ENCODE measurements at regions of chr14 and their contacts with region 1.

Region 1: DNA sequence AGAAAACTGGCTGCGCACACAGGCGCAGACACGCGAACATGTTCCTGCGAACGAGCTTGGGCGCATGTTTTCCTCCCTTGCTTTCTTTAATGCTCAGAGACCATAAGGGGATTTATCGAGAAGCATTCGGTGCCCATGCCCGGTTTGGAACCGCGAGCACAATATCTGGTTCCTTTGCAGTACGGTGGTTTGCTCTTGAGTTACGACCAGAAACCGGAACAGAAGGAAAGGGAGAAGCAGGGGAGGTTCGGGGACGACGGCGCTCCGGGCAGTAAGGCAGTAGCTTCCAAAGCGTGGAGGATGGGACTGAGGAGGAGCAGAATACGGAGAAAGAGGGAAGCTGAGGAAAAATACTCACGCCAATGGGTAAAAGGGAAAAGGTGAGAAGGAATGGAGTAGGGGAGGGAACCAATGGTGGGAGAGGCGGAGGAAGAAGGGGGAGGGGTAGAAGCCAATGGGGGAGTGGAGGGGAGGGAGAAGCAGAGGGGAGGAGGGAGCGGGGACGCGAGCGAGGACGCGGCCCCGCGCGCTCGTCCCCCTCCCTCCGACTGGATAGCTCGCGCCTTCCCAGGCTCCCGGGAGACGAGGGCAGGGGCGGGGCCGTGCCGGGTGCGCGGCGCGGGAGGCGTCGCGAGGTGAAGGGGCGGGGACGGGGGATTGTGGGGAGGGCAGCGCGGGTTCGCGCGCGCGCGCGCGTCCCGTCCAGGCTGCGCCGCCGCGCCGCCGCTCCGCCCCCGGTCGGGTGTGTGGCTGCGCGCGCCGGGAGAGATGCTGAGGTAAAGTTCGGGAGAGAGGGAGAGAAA is 625 bp upstream of the ARHGAP5 start:
- DNase-seq: peak; percentile 87 to 99 (median 96)

Region 2: GRCh38 chr14:31561155-31561846 is 515.2 kb before region 1 on chr14 and contains the start of gene NUBPL:
- intact Hi-C with region 1: loop called (anchors 10 kb)
- DNase-seq: peak; percentile 92 to 99 (median 94)

Region 3: GRCh38 chr14:31937721-31938346 is 138.6 kb before region 1 on chr14:
- intact Hi-C with region 1: loop called (anchors 10 kb)
- DNase-seq: peak in 4 of 10 donors; percentile 18 to 75 (median 40)

Region 4: DNA sequence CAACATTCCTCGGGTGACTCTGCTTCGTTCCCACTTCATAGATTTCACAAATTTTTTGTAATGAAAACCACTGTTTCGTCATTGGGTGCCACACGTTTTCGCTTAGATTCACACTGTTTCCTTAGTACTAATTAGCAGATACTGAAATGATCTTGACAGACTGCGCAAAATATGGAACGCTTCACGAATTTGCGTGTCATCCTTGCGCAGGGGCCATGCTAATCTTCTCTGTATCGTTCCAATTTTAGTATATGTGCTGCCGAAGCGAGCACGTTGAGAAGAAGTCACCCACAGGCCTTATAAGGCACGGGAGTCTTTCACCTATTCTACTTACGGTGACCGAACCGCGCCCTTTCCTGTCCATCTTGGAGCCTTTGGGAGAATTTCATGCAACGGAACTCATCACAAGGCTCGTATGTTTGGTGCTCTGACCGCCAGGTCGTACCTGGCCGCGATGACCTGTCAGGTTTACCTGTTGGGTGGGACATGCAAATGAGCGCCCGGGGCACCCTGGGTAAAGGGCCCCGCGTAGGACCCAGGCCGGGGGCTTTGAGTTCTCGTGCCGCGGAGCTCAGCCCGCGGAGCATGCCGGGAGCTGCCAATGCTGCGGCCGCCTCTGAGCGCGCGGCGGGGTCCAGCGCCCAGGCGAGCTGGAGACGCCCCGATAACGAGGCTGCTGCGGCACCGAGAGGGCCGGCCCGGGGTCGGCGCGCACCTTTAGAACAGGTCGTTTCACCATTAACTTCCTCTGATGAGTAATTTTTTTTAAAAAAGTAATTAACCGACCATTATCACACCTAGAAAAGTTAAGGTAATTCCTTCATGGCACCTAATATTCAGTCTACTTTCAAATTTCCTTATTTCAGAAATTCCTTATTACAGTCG is 126.8 kb after region 1 on chr14 and contains the start of gene RNU6-8:
- intact Hi-C with region 1: loop called (anchors 1 kb)
- DNase-seq: peak; percentile 70 to 98 (median 84)

Region 5: DNA sequence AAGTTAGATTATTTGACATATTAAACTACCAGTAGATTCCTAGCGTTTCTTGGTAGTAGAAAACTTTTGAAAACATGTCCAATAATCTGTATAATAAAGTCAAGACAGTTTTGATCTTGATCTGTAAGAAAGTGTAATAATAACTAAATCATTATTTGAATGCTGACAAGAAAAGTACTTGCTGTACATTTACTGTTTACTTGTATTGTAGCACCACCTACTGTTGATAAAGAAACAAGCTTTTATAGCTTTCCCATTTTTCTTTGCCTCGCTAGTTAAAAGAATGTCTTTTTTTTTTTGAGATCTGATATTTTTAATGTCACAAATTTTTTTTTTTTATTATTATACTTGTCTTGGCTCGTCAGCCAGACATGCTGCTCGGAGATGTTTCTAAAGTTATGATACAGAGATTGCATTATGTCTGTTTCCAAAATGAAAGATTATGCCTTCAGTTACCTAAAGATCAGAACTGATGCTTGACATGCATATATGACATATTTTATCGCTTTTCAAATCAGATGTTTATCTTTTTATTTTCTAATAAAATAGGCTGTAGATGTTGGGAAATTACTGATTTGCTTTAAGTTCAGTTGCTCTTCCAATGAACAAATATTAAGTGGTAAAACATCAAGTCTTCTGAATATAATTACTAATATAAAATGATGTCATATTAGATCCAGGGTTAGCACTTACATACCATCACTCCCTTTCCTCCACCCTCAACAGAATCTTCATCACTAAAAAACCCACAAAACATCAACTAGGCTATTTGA is 393.1 kb after region 1 on chr14:
- intact Hi-C with region 1: loop called (anchors 5 kb)
- DNase-seq: no peak

Region 6: GRCh38 chr14:32560209-32560857 is 483.9 kb after region 1 on chr14:
- intact Hi-C with region 1: loop called (anchors 10 kb)
- DNase-seq: peak in 7 of 10 donors; percentile 26 to 80 (median 61)

Region 7: DNA sequence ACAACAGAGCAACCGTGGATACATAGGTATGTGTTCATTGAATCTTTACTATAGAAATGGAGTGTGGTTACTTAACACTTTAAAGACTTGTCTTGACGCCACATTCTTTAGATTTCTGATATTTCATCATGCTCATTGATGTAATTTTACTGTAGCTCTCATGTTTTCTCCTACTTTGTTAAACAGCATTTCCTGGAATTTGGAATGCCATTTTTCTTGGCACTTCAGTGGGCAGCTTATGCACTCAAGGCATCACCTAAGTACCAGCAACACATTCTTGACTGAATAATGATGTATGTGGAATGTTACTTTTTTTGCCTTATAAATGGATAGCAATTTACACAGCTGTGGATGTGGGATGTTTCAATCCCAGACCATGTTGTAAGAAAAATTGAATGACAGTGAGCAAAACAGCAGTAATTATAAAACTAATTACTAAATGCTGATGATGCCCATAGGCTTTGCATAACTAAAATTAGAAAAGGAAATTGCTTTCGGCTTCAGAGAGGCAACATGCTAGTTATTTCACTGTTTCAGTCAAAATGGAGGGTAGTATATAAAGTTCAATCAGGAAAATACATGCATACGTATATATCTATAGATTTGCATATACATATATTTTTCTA is 1160.7 kb after region 1 on chr14:
- intact Hi-C with region 1: no loop called
- DNase-seq: no peak

Measured in posterior cingulate gyrus (tissue), 11 donors.